ENCODE measurements at regions of chr12 and their contacts with region 1.

Region 1: DNA sequence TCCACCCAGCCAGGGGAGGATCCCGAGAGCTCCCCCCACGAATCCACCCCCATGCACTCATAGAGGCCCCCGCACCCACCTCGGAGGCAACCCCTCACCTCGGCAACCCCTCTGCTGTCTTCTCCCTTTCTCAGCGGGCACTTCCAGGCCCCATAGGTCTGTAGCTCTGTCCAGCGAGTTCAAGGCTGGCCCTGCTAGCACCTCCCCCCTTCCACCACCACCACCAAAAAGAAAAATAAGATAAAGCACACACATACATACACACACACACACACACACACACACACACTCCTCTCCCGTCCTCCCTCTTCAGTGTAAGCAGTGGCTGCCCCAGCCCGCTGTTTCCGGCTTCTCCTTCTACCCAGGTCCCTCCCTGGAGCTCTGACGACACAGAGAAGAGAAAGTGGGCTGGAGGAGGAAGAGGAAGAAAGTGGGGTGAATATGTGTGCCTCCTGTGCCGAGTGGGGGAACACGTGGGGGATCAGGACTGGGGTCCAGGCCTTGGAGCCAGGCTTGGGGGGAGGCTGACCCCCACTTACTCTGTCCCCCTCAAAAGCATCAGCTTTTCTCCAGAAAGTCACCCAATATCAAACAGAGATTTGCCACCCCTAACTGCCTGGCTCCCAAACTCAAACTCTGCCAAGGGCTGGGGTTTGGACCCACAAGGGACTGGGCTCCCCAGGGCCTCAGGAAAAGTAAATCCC is at the start of gene STAT6:
- DNase-seq: no peak
- H3K4me3 ChIP-seq: peak within 1 kb of the TSS; percentile 73
- CTCF ChIP-seq: no peak

Region 2: GRCh38 chr12:57069523-57069922 is 41.7 kb before region 1 on chr12:
- CTCF ChIA-PET with region 1: interaction called, 148 read pairs
- POLR2A ChIA-PET with region 1: interaction called, 24 read pairs
- DNase-seq: no peak
- H3K4me3 ChIP-seq: no peak overlapping the region
- CTCF ChIP-seq: peak; percentile 70

Region 3: GRCh38 chr12:57096099-57096572 is 15.0 kb before region 1 on chr12:
- CTCF ChIA-PET with region 1: interaction called, 218 read pairs
- POLR2A ChIA-PET with region 1: interaction called, 64 read pairs
- DNase-seq: no peak
- H3K4me3 ChIP-seq: no peak overlapping the region
- CTCF ChIP-seq: no peak

Region 4: DNA sequence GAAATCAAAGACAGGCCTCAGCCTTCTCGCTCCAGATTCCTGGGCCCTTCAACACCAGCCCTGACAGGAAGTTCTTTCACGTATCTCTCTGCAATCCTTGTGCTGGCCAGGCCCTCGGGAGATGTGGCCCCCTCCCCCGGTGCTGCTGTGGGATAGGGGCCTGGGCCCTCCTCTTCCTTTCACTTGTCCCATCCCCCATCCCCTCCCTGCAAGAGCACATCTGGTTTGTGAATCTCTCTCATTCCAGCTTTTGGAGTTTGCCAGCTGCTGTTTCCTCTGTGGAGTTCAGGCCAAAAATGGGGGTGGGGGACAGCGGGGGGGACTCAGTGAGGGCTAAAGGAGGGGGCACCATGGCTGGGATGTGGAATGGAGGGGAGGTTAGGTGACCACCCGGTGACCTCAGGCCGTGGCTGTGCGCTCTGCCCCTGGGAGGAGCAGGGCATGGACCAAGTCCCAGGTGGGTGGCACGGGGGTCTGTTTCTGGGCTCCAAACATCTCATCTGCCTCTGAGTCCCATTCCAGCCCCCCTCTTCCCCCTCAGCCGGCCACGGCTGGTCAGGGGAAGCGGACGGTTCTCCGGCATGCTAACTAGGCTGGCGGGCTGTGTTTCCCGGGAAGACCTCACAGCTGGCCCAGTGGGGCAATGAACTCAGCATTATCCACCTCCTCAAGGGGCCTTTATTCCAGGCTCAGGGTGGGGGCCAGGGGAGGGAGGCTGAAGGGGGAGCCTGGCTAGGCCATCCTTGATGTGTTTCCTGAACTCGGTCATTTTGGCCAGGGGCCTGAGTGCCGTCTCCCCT is 24.5 kb after region 1 on chr12:
- CTCF ChIA-PET with region 1: interaction called, 14 read pairs
- POLR2A ChIA-PET with region 1: interaction called, 12 read pairs
- DNase-seq: no peak
- H3K4me3 ChIP-seq: peak overlapping the region; percentile 27
- CTCF ChIP-seq: no peak

Region 5: DNA sequence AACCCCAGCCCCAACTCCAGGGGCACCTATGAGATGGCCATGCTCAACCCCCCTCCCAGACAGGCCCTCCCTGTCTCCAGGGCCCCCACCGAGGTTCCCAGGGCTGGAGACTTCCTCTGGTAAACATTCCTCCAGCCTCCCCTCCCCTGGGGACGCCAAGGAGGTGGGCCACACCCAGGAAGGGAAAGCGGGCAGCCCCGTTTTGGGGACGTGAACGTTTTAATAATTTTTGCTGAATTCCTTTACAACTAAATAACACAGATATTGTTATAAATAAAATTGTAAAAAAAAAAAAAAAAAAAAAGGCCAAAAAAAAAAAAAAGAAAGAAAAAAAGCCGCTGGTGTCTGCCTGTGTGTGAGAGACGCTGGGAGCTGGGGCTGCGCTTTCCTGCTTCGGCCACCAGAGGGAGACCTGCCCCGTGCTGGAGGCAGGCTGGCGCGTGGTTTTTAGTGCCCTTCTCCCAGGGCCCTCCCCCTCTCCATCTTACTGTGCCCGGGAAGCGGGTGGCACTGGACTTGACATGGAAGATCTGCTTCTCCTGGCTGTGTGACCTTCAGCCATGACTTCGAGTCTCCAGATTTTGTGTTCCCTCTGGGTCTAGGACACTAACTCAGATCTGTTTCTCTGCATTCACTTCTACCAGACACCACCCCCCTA is 102.0 kb after region 1 on chr12:
- CTCF ChIA-PET with region 1: interaction called, 19 read pairs
- POLR2A ChIA-PET with region 1: no interaction called
- DNase-seq: no peak
- H3K4me3 ChIP-seq: no peak overlapping the region
- CTCF ChIP-seq: peak; percentile 89

Region 6: DNA sequence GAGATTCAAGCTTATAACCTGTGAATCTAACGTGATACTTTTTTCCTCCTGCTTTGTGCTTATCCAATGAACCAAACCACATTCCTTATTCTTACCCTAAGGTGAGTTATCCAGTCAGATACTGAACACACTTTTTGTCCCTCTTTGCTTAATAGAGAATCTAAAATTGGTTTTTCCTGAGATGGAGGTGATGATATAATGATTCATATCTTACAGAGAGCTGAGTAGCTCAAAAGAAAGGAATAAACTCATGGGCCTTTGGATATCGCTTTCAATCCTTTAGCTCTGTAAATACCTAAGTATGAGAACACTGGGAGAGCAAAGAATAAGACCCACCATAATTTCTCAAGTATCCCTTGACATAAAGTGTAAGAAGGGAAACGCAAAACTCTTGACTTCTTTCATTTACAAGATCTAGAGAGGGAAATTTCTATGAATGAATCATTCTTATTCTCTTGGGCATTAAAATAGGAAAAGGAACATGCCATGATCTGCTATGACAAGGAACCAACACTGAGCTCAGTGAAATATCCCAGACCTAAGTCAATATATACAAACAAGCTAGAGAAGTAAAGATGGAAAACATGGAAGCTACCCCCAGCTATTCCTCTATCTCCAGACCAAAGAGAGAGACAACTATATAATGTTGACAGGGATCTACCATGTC is 221.6 kb after region 1 on chr12:
- CTCF ChIA-PET with region 1: no interaction called
- POLR2A ChIA-PET with region 1: no interaction called
- DNase-seq: no peak
- H3K4me3 ChIP-seq: no peak overlapping the region
- CTCF ChIP-seq: no peak